Activated B cell treated with CpG ODN at 0.5 μM for 24 hours (primary cell): ENCODE measurements at regions of chr17 and their contacts with region 1.

Region 1: DNA sequence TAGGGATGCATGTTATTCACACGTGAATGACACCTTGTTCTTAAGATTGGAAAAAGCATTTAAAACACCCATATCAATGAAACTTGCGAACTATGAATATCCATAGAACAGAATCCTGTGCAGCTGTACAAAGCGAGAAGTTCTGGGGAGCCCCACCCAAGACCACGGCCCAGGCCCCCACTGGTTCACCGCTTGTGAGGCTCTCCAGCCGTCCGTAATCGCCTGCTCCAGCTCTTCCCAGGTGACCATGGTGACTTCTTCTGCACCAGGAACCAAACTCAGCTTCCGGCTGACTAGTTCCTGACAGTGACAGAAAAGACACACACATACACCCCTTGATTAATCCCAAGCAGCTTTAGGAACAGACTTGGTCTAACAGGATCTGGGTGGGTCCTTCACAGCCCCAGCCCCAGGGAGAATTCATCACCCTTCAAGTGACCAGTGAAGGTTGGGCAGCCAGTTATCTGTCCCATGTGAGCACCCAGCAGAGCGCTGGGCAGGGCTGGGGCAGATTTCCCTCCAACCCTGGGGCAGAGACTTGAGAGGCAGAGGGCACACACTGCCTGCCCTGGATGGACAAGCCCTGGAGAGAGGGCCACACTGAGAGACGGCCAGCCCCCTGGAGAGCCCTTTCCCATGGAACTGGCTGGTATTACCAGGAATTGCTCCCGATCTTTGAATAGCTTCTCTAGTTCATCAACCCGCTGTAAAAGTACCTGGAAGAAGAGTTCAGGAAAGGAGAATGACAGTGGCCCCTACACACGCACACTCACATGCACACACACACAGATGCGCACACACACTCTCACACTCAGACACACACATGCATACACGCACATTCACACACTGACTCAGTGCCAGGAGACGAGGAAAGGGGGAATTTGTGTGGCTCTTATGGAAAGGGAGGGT is 3.6 kb downstream of the QRICH2 start:
- DNase-seq: no peak
- ATAC-seq: no peak
- H3K4me3 Mint-ChIP-seq: no peak overlapping the region
- H3K27ac Mint-ChIP-seq: no peak overlapping the region
- H3K4me1 Mint-ChIP-seq: peaks cover 3% of the 10 kb centered on the region
- H3K27me3 Mint-ChIP-seq: no peaks in the 10 kb centered on the region
- CTCF ChIP-seq: no peak

Region 2: GRCh38 chr17:76014184-76014924 is 290.1 kb before region 1 on chr17:
- CTCF ChIA-PET with region 1: interaction called, 50 read pairs
- POLR2A ChIA-PET with region 1: no interaction called
- intact Hi-C with region 1: loop called (anchors 1 kb)
- DNase-seq: peak; percentile 66
- ATAC-seq: peak; percentile 99
- H3K4me3 Mint-ChIP-seq: no peak overlapping the region
- H3K27ac Mint-ChIP-seq: no peak overlapping the region
- H3K4me1 Mint-ChIP-seq: peaks cover 5% of the 10 kb centered on the region
- H3K27me3 Mint-ChIP-seq: no peaks in the 10 kb centered on the region
- CTCF ChIP-seq: no peak

Region 3: DNA sequence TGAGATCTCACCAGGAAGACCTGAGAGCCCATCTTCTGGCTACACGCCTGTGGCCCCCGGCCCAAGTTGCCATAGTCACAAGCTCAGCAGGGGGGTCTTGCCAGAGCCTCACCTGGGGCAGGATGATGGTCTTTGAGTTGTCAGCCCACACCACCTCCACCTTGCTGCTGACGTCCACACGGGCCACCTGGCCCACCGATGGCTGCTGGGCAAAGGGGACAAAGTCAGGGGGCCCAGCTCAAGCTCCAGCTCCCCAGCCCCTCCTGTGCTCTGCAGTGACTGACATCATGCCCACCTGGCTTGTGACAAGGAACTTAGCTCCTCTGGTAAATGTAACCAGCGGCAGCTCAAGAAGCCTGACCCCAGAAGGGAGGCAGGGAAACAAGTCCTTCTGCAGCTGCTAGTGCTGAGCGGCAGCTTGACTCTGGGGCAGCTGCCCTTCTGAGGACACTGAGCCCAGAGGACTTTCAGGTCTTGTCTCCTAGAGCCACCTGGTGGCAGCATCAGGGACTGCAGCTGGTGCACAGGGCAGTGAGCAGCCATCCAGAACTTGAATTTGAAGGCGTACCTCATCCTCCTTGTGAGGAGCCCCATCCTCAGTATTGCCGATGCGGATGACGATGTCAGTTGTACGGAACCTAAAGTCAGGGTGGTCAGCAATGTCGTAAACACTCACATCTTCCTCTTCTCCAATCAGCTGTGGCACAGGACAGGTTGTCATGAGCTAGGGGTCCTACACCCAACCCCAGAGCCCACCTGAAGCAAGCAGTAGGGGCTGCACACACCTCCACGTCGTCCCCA is 93.4 kb after region 1 on chr17:
- CTCF ChIA-PET with region 1: interaction called, 82 read pairs
- POLR2A ChIA-PET with region 1: no interaction called
- intact Hi-C with region 1: loop called (anchors 1 kb)
- DNase-seq: peak; percentile 79
- ATAC-seq: peak; percentile 93
- H3K4me3 Mint-ChIP-seq: no peak overlapping the region
- H3K27ac Mint-ChIP-seq: no peak overlapping the region
- H3K4me1 Mint-ChIP-seq: peaks cover 3% of the 10 kb centered on the region
- H3K27me3 Mint-ChIP-seq: no peaks in the 10 kb centered on the region
- CTCF ChIP-seq: peak; percentile 98

Region 4: DNA sequence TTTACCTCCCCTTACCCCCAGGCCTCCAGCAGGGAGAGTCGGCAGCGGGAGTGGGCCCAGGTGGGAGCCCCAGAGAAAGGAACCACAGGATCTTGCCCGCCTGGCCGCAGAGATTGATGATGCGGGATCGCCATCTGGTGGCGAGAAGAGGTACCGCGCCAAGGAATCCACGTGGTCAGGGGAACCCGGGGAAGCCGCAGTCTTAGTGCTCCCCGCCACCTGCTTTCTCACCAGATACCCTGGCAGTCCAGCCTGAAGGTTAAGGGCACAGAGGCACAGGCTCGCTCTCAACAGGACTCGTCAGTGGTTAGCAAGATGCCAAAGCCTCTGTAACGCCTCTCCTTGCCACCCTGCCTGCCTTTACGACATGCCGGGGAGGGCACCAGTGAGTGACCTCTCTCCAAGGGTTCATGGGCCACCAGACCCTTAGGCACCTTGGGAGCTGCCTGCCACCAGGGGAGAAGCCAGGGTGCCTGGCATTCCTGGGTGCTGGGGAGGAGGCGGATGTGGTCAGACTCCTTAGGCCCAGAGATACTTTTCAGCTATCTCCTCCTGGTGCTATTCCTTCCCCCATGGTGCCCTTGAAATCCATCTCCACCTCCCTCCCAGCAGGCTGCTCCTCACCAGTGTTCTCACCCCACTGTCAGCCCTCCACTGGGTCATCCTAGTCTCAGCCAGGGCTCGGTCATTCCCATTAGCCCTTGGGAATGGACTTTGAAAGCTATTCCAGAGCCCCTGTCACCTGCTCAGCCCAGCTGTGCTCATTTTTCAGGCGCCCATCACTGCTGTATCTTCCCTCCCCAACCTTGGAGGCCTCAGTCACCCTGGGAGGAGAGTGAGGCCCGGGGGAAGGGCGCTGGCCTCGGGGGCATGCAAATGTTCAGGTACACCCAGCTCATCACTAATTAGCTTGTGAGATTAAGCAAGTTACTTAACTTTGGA is 202.2 kb after region 1 on chr17:
- CTCF ChIA-PET with region 1: interaction called, 8 read pairs
- POLR2A ChIA-PET with region 1: no interaction called
- intact Hi-C with region 1: loop called (anchors 1 kb)
- DNase-seq: peak; percentile 93
- ATAC-seq: peak; percentile 85
- H3K4me3 Mint-ChIP-seq: no peak overlapping the region
- H3K27ac Mint-ChIP-seq: peak overlapping the region; percentile 50
- H3K4me1 Mint-ChIP-seq: peaks cover 26% of the 10 kb centered on the region
- H3K27me3 Mint-ChIP-seq: peaks cover 4% of the 10 kb centered on the region
- CTCF ChIP-seq: peak; percentile 66

Region 5: GRCh38 chr17:76623271-76624146 is 319.0 kb after region 1 on chr17:
- CTCF ChIA-PET with region 1: interaction called, 4 read pairs
- POLR2A ChIA-PET with region 1: interaction called, 6 read pairs
- intact Hi-C with region 1: loop called (anchors 1 kb)
- DNase-seq: peak; percentile 68
- ATAC-seq: peak; percentile 98
- H3K4me3 Mint-ChIP-seq: no peak overlapping the region
- H3K27ac Mint-ChIP-seq: no peak overlapping the region
- H3K4me1 Mint-ChIP-seq: no peaks in the 10 kb centered on the region
- H3K27me3 Mint-ChIP-seq: peaks cover 15% of the 10 kb centered on the region
- CTCF ChIP-seq: peak; percentile 78